Adrenal gland (tissue), 19 donors: ENCODE measurements at regions of chr10 and their contacts with region 1.

Region 1: DNA sequence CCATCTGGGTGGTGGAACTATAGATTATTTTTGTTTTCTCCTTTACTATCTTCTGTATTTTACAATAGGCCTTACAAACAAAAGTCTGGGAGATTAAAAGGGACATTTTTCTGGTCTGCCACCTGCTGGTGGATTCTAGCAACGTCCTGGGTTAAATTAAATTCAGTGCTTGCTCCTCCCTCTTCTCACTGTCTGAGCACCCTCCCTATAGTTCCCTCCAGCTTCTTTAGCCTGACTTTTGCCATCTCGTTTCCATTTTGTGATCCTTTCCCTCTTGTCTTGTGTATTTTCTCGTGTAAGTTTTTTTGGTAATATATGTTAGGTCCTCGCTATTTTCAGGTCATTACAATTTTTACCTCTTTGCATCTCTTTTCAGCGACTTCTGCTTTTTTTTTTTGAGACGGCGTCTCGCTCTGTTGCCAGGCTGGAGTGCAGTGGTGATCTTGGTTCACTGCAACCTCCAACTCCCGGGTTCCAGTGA is 16.1 kb downstream of the ANKRD16 start:
- DNase-seq: peak; percentile 60 to 91 (median 73)
- H3K4me3 ChIP-seq: no peak overlapping the region
- H3K27ac ChIP-seq: no peak overlapping the region
- H3K4me1 ChIP-seq: peaks cover 4 to 7% of the 10 kb centered on the region in 2 donors
- H3K27me3 ChIP-seq: no peaks in the 10 kb centered on the region
- CTCF ChIP-seq: peak; percentile 75 to 86 (median 80)
- POLR2A ChIP-seq: no peak

Region 2: GRCh38 chr10:5446390-5446926 is 427.1 kb before region 1 on chr10:
- intact Hi-C with region 1: loop called in 1 of 2 experiments (anchors 10 kb)
- DNase-seq: peak; percentile 87 to 96 (median 93)
- H3K4me3 ChIP-seq: peak overlapping the region in 2 of 4 donors; percentile 15 to 63
- H3K27ac ChIP-seq: peak overlapping the region in 4 of 5 donors; percentile 35 to 66 (median 58)
- H3K4me1 ChIP-seq: peaks cover 0 to 16% of the 10 kb centered on the region in 2 donors
- H3K27me3 ChIP-seq: no peaks in the 10 kb centered on the region
- CTCF ChIP-seq: no peak
- POLR2A ChIP-seq: peak in 1 of 2 donors; percentile 87

Region 3: DNA sequence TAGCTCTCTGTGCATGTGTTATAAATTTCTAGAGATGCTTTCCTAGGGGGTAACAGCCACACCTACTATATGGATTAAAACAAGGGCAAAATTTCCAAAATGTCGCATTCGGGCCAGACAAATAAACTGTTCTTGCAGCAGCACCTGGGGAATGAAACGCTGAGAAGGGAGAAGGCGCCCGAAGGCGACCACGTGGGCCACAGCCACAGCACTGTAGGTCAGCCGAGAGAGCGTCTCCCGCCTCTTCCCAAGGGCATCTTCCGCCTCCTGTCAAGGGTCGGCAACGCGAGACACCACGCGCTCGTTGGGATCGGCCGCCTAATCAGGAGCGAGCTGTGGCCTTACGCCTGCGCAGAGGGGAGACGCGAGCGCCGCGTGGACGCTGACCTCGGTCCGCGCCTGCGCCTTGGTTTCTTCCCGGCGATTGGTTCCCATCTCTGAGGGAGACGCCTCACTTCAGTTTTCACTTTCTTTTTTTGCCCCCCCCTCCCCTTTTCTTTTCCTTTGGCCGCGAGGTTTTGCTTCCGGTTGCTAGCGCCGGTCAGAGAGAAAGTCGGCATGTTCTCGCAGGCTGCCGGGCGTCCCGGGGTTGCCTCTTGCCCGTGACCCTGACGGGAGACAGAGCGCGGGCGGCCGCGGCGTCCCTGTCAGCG is 189.1 kb before region 1 on chr10 and contains the start of gene TASOR2:
- intact Hi-C with region 1: loop called in 1 of 2 experiments (anchors 10 kb)
- DNase-seq: peak; percentile 98 to 99 (median 99)
- H3K4me3 ChIP-seq: peak within 1 kb of the TSS; percentile 51 to 100 (median 78)
- H3K27ac ChIP-seq: peak within 1 kb of the TSS; percentile 81 to 97 (median 88)
- H3K4me1 ChIP-seq: peaks cover 11 to 22% of the 10 kb centered on the region in 2 donors
- H3K27me3 ChIP-seq: no peaks in the 10 kb centered on the region
- CTCF ChIP-seq: no peak
- POLR2A ChIP-seq: peak in 1 of 2 donors; percentile 58
- total RNA-seq, gene TASOR2: 36.6 to 182 (median 53.3) TPM

Region 4: DNA sequence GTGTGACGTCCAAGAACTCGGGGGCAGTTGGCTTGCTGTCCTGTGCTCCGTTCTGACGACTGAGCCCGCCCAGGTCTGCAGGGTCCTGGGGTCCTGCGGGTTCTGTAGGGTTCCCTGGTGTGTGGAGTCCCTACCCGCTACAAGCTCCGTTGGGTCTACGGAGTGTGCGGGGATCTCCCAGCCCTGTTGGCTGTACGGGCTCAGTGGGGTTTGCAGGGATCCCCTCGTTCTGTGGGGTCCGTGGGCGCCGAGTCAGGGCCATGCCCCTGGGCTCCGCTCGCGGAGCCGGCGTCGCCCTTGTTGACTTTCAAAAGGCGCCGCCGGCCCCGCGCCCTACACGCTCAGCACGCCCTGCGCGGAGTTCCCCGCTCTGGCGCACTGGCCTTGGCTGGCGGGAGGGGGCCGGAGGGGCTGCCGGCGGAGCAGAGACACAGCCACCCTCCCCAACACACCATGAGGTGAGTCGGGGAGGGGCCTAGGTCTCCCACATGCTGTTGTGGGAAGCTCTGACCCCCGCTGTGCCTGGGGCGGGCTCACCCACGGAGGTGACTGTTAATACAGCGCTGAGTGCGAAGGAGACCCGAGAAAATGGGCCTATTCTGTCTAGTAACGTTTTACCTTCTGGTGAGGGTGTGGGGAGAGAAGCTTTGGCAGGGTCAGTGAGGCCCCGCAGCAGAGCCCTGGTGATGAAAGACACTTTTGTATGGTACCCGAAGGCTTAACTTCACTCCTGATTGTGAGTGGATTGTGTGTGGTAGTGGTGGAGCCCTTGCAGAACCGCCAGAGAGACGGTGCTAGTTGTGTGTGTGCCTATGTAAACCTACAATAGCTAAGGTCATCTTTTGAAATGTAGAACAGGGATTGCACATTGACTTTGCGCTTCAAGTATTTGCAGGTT is 180.8 kb before region 1 on chr10:
- intact Hi-C with region 1: loop called (anchors 10 kb)
- DNase-seq: peak; percentile 52 to 69 (median 57)
- H3K4me3 ChIP-seq: peak overlapping the region in 2 of 4 donors; percentile 24 to 67
- H3K27ac ChIP-seq: peak overlapping the region in 4 of 5 donors; percentile 11 to 60 (median 39)
- H3K4me1 ChIP-seq: peaks cover 3 to 29% of the 10 kb centered on the region in 2 donors
- H3K27me3 ChIP-seq: no peaks in the 10 kb centered on the region
- CTCF ChIP-seq: no peak
- POLR2A ChIP-seq: no peak

Region 5: GRCh38 chr10:5829267-5829666 is 44.3 kb before region 1 on chr10:
- intact Hi-C with region 1: loop called in 1 of 2 experiments (anchors 10 kb)
- DNase-seq: no peak
- H3K4me3 ChIP-seq: no peak overlapping the region
- H3K27ac ChIP-seq: no peak overlapping the region
- H3K4me1 ChIP-seq: no peaks in the 10 kb centered on the region
- H3K27me3 ChIP-seq: no peaks in the 10 kb centered on the region
- CTCF ChIP-seq: no peak
- POLR2A ChIP-seq: no peak

Region 6: DNA sequence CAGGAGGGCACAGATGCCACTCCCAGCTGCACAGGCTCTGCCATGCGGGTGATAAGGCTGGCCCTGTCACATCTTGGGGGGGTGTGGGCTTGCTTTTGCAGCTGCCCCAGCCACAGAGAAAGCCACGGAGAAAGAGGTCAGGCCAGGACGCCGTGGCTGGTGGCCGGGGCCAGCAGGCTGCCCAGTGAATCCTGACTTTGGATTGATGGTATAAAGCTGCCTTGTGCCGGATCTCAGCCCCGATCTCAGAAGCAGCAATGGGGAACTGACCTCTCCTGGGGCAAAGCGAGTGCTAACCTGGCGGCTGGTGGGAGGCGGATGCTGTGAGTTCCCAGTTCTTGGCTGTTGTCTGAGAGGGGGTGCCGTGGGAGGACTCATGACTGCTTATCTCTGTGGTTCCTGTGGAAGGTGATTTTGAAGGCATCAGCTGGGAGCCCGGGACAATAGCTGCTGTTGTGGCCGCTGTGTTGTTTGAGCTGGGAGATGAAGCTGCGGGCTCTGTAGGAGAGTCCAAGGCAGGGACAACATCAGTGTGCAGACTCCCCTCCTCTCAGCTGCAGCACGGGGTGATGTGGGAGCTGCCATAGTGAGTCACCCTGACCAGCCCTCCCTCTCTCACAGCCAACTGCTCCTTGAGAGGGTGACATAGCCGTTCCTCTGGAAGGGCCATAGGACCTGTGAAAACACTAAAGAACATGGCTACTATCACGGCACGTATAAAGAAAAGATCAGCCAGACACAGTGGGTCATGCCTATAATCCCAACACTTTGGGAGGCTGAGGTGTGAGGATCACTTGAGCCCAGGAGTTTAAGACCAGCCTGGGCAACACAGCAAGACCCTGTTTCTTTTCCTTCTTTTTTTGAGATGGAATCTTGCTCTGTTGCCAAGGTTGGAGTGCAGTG is 86.8 kb after region 1 on chr10:
- intact Hi-C with region 1: no loop called
- DNase-seq: peak in 1 of 7 donors; percentile 35
- H3K4me3 ChIP-seq: no peak overlapping the region
- H3K27ac ChIP-seq: no peak overlapping the region
- H3K4me1 ChIP-seq: no peaks in the 10 kb centered on the region
- H3K27me3 ChIP-seq: no peaks in the 10 kb centered on the region
- CTCF ChIP-seq: no peak
- POLR2A ChIP-seq: no peak